ENCODE measurements at regions of chr12 and their contacts with region 1.

Region 1: GRCh38 chr12:14365294-14366208 is at the start of gene ATF7IP:
- DNase-seq: peak; percentile 96
- H3K4me3 ChIP-seq: peak within 1 kb of the TSS; percentile 44
- H3K27ac ChIP-seq: peak within 1 kb of the TSS; percentile 90
- H3K4me1 ChIP-seq: no peaks in the 10 kb centered on the region
- H3K27me3 ChIP-seq: no peaks in the 10 kb centered on the region
- CTCF ChIP-seq: peak; percentile 15
- total RNA-seq, gene ATF7IP: 36.2 to 44.9 TPM

Region 2: DNA sequence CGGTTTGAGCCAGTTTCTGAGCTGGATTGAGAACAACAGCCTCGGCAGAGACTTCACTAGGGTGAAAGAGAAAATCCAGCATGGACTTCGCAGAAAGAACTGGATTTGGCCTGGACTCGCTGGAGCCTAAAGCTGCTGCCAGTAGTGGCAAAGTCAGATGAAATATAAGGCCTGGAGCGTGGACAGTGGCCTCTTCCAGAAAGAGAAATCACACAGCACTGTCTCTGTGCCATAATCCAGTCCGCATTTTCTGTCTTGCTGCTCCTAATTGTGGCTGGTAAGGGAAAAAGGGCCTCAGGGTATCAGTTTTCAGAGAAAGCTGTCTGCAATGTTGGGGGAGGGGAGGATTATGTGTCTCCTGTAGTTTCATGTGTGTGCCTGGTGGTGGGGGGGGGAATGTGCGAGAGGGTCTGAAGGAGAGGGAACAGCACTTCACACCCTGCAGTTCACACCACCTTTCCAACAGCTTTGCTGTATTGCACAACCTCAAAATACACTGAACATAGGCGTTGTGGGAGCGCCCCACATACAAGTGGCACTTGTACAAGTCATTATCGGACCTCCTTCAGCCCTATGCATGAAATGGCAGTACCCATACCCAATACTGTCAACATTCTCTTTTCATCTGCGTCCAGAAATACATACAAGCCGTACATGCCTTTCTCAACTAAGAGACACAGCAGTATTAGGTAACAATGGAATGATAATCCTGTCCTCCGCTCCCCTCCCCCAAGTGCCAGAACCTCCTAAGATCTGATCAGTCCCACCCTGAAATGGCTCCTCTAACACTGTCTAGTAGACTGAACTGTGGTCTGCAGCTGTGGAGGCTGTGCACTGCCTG is 107.6 kb before region 1 on chr12:
- intact Hi-C with region 1: loop called (anchors 5 kb)
- DNase-seq: peak; percentile 96
- H3K4me3 ChIP-seq: no peak overlapping the region
- H3K27ac ChIP-seq: peak overlapping the region; percentile 60
- H3K4me1 ChIP-seq: no peaks in the 10 kb centered on the region
- H3K27me3 ChIP-seq: no peaks in the 10 kb centered on the region
- CTCF ChIP-seq: no peak